HEK293T (cell line): ENCODE measurements at regions of chr6 and their contacts with region 1.

Region 1: DNA sequence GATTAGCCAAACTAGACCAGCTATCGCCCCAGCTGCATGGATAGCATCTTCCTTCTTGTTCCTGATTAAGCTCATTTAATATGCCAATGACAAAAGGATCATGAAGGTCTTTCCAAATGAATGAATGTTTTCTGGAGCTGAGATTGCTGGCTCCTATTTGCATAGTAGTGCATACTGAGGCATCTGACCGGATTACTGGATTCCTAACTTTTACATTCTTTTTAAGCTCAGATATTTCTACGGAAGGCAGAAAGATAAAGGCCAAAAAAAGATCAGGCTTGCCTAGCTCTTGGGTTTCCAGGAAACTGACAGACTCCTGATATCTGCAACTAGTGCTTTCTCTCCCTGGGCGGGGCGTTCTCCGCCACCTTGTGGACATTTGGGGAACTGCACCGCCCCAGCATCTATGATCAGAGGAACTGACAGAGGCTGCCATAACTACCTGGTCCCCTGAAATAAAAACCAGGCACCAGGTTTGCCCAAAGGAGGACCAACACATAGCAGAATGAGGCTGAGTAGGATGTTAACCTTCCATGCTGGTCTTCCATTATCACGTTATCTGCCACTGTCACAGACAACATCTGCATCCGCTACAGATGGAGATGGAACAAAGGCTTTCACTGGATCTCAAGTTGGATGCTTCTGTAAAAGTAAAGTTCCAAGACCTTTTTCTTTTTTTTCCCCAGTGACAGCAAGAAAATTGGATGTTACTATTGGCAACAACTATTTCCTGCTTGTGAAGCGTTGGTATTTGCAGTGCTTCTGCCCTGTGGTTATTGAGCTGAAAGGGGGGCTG is 33.2 kb downstream of the NT5E start:
- DNase-seq: peak; percentile 74

Region 2: GRCh38 chr6:85460921-85461797 is 21.9 kb before region 1 on chr6:
- CTCF ChIA-PET with region 1: interaction called, 14 read pairs
- POLR2A ChIA-PET with region 1: no interaction called
- DNase-seq: no peak